Left cardiac atrium (tissue), 4 donors: ENCODE measurements at regions of chr16 and their contacts with region 1.

Region 1: GRCh38 chr16:30609926-30610839 is at the start of gene ZNF689:
- DNase-seq: peak; percentile 93
- ATAC-seq: peak; percentile 99
- total RNA-seq, gene ZNF689: 5.2 to 6.6 TPM

Region 2: GRCh38 chr16:30458561-30459394 is 151.4 kb before region 1 on chr16:
- intact Hi-C with region 1: loop called in 1 of 2 experiments (anchors 10 kb)
- DNase-seq: peak; percentile 50
- ATAC-seq: peak; percentile 68 to 74

Region 3: GRCh38 chr16:30874821-30875717 is 264.9 kb after region 1 on chr16:
- intact Hi-C with region 1: no loop called
- DNase-seq: peak; percentile 93
- ATAC-seq: peak; percentile 99